CD4-positive, alpha-beta T cell (primary cell): ENCODE measurements at regions of chr1 and their contacts with region 1.

Region 1: DNA sequence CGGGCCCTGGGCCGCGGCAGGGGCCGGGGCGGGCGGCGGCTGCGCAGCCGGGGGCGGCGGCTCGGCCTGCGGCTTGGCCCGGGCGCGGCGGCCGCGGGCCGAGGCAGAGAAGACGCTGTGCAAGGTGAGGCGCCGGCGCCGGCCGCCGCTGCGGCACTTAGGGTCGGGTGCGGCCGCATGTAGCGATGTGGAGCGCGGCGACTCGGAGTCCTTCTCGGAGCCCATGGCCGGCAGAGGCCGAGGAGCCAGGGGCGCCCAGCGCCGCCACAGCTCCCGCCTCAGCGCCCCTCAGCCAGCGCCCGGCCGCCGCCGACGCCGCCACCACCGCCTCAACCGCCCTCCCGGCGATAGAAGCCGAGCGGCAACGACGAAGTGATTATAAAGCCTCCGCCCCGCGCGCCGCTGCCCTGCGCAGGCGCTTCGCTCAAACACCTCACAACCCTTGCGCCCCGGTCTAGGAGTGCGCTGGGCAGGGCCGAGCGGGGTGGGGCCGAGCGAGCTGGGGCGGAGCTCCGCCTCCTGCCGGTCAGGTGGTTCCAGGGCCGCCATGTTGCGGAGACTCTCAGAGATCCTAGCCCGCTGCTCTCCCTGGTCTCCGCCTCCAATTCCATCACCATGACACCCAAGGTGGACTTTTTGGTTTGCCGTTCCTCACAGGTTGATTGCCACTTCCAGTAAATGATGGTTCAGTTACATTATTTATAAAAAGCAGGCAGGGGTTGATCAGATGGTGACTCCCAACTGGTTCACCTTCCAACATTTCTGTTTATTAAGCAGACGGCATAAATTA is at the start of gene RNF19B:
- DNase-seq: peak; percentile 87 to 97 (median 94)
- ATAC-seq: peak; percentile 93
- H3K4me3 ChIP-seq: peak within 1 kb of the TSS; percentile 73
- H3K4me3 Mint-ChIP-seq: peak within 1 kb of the TSS; percentile 93
- H3K27ac ChIP-seq: peak within 1 kb of the TSS; percentile 59 to 61
- H3K27ac Mint-ChIP-seq: peak within 1 kb of the TSS; percentile 89
- H3K4me1 ChIP-seq: peaks cover 21% of the 10 kb centered on the region
- H3K4me1 Mint-ChIP-seq: peaks cover 37% of the 10 kb centered on the region
- H3K27me3 ChIP-seq: no peaks in the 10 kb centered on the region
- H3K27me3 Mint-ChIP-seq: no peaks in the 10 kb centered on the region
- CTCF ChIP-seq: no peak
- total RNA-seq, gene RNF19B: 33.4 to 37.4 TPM

Region 2: GRCh38 chr1:32786856-32787255 is 177.8 kb before region 1 on chr1:
- CTCF ChIA-PET with region 1: no interaction called
- POLR2A ChIA-PET with region 1: no interaction called
- intact Hi-C with region 1: no loop called
- DNase-seq: peak in 3 of 14 experiments; percentile 25 to 35 (median 27)
- ATAC-seq: no peak
- H3K4me3 ChIP-seq: no peak overlapping the region
- H3K4me3 Mint-ChIP-seq: no peak overlapping the region
- H3K27ac ChIP-seq: no peak overlapping the region
- H3K27ac Mint-ChIP-seq: peak overlapping the region; percentile 19
- H3K4me1 ChIP-seq: peaks cover 6% of the 10 kb centered on the region
- H3K4me1 Mint-ChIP-seq: no peaks in the 10 kb centered on the region
- H3K27me3 ChIP-seq: no peaks in the 10 kb centered on the region
- H3K27me3 Mint-ChIP-seq: no peaks in the 10 kb centered on the region
- CTCF ChIP-seq: no peak

Region 3: DNA sequence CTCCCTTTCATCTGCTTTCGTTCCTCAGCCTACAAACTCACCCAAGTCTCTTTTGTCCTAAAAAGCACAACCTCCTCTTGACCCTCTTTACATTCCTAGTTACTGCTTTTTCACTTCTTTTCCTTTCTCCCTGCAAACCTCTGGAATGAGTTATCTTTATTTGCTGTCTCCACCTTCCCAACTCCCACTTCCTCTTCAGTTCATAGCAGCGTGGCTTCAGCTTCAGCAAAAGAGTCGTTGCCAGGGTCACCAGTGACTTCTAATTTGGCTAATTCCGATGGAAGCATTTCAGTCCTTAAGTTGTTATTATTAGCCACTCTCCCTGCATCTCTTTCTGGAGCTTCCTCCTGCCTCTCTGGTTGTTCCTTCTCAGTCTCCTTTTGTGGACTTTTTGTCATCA is 57.2 kb before region 1 on chr1:
- CTCF ChIA-PET with region 1: no interaction called
- POLR2A ChIA-PET with region 1: no interaction called
- intact Hi-C with region 1: no loop called
- DNase-seq: no peak
- ATAC-seq: no peak
- H3K4me3 ChIP-seq: no peak overlapping the region
- H3K4me3 Mint-ChIP-seq: no peak overlapping the region
- H3K27ac ChIP-seq: no peak overlapping the region
- H3K27ac Mint-ChIP-seq: no peak overlapping the region
- H3K4me1 ChIP-seq: no peaks in the 10 kb centered on the region
- H3K4me1 Mint-ChIP-seq: no peaks in the 10 kb centered on the region
- H3K27me3 ChIP-seq: peaks cover 4 to 12% of the 10 kb centered on the region in 2 experiments
- H3K27me3 Mint-ChIP-seq: peaks cover 26% of the 10 kb centered on the region
- CTCF ChIP-seq: no peak

Region 4: DNA sequence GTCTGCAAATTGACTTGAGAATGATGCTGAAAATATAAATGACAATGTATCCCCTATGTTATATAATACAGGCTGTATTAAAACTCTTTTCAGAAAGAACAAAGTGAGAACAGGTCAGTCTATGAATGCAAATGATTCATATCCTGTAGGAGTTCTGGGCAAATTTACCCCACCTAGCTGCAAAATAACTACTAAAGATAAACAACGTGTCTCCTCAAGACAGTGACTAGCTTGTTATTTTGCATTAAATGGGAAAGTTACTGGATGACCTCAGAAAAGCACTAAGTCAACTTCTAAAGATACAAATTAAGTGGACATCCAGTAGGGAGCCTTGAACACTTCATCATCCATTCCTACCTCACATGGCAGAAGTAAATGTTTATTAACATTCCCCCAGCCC is 11.2 kb before region 1 on chr1:
- CTCF ChIA-PET with region 1: interaction called, 5 read pairs
- POLR2A ChIA-PET with region 1: interaction called, 19 read pairs
- intact Hi-C with region 1: no loop called
- DNase-seq: peak in 1 of 14 experiments; percentile 27
- ATAC-seq: no peak
- H3K4me3 ChIP-seq: no peak overlapping the region
- H3K4me3 Mint-ChIP-seq: no peak overlapping the region
- H3K27ac ChIP-seq: no peak overlapping the region
- H3K27ac Mint-ChIP-seq: no peak overlapping the region
- H3K4me1 ChIP-seq: peaks cover 14% of the 10 kb centered on the region
- H3K4me1 Mint-ChIP-seq: peaks cover 25% of the 10 kb centered on the region
- H3K27me3 ChIP-seq: no peaks in the 10 kb centered on the region
- H3K27me3 Mint-ChIP-seq: no peaks in the 10 kb centered on the region
- CTCF ChIP-seq: no peak

Region 5: DNA sequence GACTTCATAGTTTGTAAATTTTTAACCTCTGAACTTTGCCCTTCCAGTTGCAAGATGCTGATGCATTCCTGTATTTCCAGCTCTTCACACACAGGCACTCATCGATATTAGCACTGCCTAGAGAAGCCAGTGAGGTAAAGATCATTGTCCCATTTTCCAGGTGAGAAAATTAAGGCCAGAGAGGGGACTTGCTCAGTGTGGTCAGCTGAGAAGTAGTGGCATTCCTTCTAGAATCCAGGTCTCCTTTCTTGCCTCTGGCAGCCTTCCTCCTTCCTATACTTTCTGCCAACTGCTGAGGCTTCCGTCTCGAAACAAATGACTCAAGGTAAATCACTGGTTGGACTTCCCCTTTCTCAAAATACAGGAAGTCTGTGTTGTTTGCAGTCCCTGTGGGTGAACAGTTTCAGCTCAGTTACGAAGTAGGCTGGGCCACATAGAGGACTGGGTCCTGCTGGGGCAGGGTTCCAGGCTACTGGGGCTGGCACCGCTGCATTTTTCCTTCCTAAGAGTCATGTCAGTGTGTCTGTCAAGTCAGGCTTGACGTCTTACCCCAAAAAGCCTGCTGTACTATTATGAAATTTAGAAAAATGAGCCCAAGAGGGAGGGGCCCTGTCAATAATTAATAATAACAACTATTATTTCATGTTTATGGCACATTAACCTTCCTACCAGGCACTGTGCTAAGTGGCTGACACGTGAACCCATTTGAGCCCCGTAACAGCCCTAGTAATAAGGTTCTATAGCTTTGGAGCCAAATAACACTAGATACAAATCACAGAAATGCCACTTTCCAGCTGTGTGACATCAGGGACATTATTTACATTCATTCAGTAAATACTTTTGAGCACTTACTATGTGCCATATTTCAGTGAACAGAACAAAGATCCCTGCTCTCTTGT is 16.6 kb after region 1 on chr1:
- CTCF ChIA-PET with region 1: interaction called, 4 read pairs
- POLR2A ChIA-PET with region 1: interaction called, 71 read pairs
- intact Hi-C with region 1: loop called (anchors 2 kb)
- DNase-seq: peak; percentile 36 to 91 (median 56)
- ATAC-seq: peak; percentile 91
- H3K4me3 ChIP-seq: peak overlapping the region; percentile 45
- H3K4me3 Mint-ChIP-seq: peak overlapping the region; percentile 23
- H3K27ac ChIP-seq: peak overlapping the region; percentile 85 to 87
- H3K27ac Mint-ChIP-seq: peak overlapping the region; percentile 91
- H3K4me1 ChIP-seq: peaks cover 59% of the 10 kb centered on the region
- H3K4me1 Mint-ChIP-seq: peaks cover 44% of the 10 kb centered on the region
- H3K27me3 ChIP-seq: no peaks in the 10 kb centered on the region
- H3K27me3 Mint-ChIP-seq: no peaks in the 10 kb centered on the region
- CTCF ChIP-seq: no peak

Region 6: GRCh38 chr1:33036526-33037503 is 72.2 kb after region 1 on chr1 and contains the start of gene AK2:
- CTCF ChIA-PET with region 1: no interaction called
- POLR2A ChIA-PET with region 1: interaction called, 6 read pairs
- intact Hi-C with region 1: loop called in 1 of 2 experiments (anchors 5 kb)
- DNase-seq: peak; percentile 71 to 95 (median 86)
- ATAC-seq: peak; percentile 99
- H3K4me3 ChIP-seq: peak within 1 kb of the TSS; percentile 93
- H3K4me3 Mint-ChIP-seq: peak within 1 kb of the TSS; percentile 98
- H3K27ac ChIP-seq: peak within 1 kb of the TSS in 1 of 2 donors; percentile 67
- H3K27ac Mint-ChIP-seq: peak within 1 kb of the TSS; percentile 34
- H3K4me1 ChIP-seq: peaks cover 35% of the 10 kb centered on the region
- H3K4me1 Mint-ChIP-seq: peaks cover 48% of the 10 kb centered on the region
- H3K27me3 ChIP-seq: no peaks in the 10 kb centered on the region
- H3K27me3 Mint-ChIP-seq: no peaks in the 10 kb centered on the region
- CTCF ChIP-seq: no peak
- total RNA-seq, gene AK2: 25.6 to 30.4 TPM

Region 7: DNA sequence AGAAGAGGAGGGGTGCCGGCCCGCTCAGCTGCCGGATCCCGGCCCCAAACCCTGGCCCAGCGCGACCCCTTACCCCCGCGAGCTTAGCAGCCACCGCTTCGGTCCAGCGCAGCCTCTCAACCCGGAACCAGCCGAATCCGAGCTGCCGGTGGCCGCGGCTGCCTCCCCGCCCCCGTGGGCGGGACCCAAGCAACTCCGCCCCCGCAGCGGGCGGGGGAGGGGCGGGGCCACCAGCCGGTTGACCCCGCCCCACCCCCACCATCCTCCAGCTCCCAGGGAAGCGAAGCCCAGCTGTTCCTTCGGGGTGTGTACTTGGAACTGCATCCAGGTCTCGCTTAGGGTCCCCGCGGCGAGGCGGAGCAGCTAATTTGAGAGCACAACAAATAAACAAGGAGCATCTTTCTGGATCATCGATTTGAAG is 217.3 kb after region 1 on chr1 and contains the start of gene TRIM62:
- CTCF ChIA-PET with region 1: interaction called, 3 read pairs
- POLR2A ChIA-PET with region 1: interaction called, 3 read pairs
- intact Hi-C with region 1: loop called in 1 of 2 experiments (anchors 5 kb)
- DNase-seq: peak; percentile 60 to 89 (median 72)
- ATAC-seq: peak; percentile 71
- H3K4me3 ChIP-seq: peak within 1 kb of the TSS; percentile 88
- H3K4me3 Mint-ChIP-seq: peak within 1 kb of the TSS; percentile 93
- H3K27ac ChIP-seq: peak within 1 kb of the TSS in 1 of 2 donors; percentile 30
- H3K27ac Mint-ChIP-seq: peak within 1 kb of the TSS; percentile 62
- H3K4me1 ChIP-seq: peaks cover 23% of the 10 kb centered on the region
- H3K4me1 Mint-ChIP-seq: peaks cover 34% of the 10 kb centered on the region
- H3K27me3 ChIP-seq: peaks cover 0 to 3% of the 10 kb centered on the region in 2 experiments
- H3K27me3 Mint-ChIP-seq: no peaks in the 10 kb centered on the region
- CTCF ChIP-seq: no peak
- total RNA-seq, gene TRIM62: 18.9 to 23.0 TPM